A673 (cell line): ENCODE measurements at regions of chr4 and their contacts with region 1.

Region 1: GRCh38 chr4:1112174-1112820 is 1.1 kb downstream of the RNF212 start:
- DNase-seq: no peak
- H3K4me3 ChIP-seq: no peak overlapping the region
- H3K27ac ChIP-seq: no peak overlapping the region
- H3K4me1 ChIP-seq: no peaks in the 10 kb centered on the region
- H3K27me3 ChIP-seq: peaks cover 14% of the 10 kb centered on the region
- CTCF ChIP-seq: no peak

Region 2: DNA sequence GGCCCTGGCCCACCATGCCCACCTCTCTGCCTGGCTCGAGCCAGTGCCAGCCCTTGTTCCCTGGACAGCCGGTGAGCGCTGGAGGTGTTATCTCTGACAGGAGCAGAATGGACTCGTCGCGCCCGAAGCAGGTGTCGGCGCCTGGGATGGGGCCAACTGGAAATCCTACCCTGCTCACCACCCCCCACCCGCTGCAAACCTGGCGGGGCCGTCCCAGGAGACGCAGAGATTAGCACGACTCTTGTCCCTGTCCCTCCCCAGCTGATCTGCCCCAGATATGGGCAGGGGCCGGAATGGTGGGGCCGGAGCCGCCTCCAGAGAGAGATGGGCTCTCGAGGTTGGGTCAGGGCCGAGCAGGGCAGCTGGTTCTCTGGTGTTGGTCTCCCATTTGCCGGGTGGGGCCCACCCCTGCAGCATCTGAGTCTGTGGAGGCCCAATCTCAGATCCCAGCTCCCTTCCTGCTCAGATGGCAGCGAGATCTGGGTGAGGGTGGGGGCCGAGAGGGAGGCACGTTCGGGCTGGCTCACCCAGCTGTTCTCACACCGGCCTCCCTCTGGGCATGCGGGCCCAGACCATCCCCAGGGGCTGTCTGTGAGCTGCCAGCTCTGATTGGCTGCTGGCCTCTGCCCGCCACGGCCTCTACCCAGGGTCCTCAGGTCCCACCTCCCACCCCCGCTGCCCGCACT is 660.7 kb after region 1 on chr4:
- CTCF ChIA-PET with region 1: interaction called, 13 read pairs
- POLR2A ChIA-PET with region 1: no interaction called
- intact Hi-C with region 1: no loop called
- DNase-seq: no peak
- H3K4me3 ChIP-seq: no peak overlapping the region
- H3K27ac ChIP-seq: no peak overlapping the region
- H3K4me1 ChIP-seq: peaks cover 7% of the 10 kb centered on the region
- H3K27me3 ChIP-seq: no peaks in the 10 kb centered on the region
- CTCF ChIP-seq: no peak